ENCODE measurements at regions of chr2 and their contacts with region 1.

Region 1: DNA sequence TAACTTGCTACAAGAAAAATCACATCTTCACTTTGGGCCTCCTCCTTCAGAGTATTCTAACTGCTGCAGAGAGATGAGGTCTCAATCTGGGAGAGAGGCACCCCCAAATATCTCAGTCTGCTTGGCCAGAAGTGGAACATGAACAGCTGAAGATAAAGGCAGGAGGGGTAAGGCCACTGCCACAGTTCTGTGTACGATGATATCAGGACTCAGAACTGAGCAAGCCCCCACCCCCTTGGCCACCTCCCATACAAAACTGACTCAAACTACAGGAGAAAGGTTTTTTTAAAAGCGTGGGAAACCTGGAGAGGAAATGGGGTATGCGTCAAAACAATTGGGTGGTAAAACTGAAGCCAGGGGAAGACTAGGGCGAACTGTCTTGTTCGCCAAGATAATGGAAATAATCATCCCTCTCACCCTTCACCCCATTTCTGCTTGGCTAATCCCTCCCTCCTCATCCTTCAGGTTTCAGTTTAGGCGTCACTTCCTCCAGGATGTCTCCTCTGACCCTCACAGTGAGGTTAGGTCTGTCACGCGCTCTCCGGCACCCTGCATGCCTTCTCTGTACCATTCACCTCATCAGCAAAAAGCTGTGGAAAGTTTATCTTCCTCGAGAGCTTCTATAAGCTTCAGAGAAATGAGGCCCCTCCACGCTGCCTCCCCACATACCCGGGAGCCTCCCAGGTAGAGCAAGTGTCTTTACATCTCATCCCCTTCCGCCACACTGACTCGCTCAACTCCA is 64.4 kb downstream of the SFXN5 start:
- DNase-seq: no peak
- H3K4me3 ChIP-seq: no peak overlapping the region
- H3K27ac ChIP-seq: no peak overlapping the region
- H3K4me1 ChIP-seq: no peaks in the 10 kb centered on the region
- H3K27me3 ChIP-seq: no peaks in the 10 kb centered on the region
- CTCF ChIP-seq: no peak
- EP300 ChIP-seq: no peak
- POLR2A ChIP-seq: no peak

Region 2: GRCh38 chr2:71207601-71208000 is 1799.5 kb before region 1 on chr2:
- intact Hi-C with region 1: no loop called
- DNase-seq: no peak
- H3K4me3 ChIP-seq: no peak overlapping the region
- H3K27ac ChIP-seq: no peak overlapping the region
- H3K4me1 ChIP-seq: no peaks in the 10 kb centered on the region
- H3K27me3 ChIP-seq: no peaks in the 10 kb centered on the region
- CTCF ChIP-seq: no peak
- EP300 ChIP-seq: no peak
- POLR2A ChIP-seq: no peak

Region 3: DNA sequence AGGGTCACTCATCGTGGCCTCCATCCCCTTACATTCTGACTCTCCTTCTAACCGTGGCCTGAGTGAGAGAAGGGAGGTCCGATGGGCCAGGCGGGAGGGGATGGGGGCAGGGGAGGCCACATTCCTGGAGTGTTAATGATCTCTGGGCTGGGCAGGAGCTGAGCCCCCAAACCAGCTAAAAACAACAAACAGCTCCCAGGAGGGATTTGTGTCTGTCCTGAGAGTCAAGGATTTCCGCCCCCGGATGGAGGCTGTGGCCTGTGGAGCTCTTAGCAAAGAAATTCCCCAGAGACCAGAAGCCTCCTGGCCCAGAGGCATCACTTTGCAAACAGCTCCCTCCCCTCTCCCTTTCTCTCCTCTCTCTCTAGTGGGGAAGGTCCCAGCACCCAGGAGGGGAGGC is 66.4 kb before region 1 on chr2:
- intact Hi-C with region 1: loop called (anchors 2 kb)
- DNase-seq: no peak
- H3K4me3 ChIP-seq: no peak overlapping the region
- H3K27ac ChIP-seq: no peak overlapping the region
- H3K4me1 ChIP-seq: peaks cover 0 to 16% (median 10%) of the 10 kb centered on the region in 4 donors
- H3K27me3 ChIP-seq: no peaks in the 10 kb centered on the region
- CTCF ChIP-seq: no peak
- EP300 ChIP-seq: no peak
- POLR2A ChIP-seq: no peak

Region 4: DNA sequence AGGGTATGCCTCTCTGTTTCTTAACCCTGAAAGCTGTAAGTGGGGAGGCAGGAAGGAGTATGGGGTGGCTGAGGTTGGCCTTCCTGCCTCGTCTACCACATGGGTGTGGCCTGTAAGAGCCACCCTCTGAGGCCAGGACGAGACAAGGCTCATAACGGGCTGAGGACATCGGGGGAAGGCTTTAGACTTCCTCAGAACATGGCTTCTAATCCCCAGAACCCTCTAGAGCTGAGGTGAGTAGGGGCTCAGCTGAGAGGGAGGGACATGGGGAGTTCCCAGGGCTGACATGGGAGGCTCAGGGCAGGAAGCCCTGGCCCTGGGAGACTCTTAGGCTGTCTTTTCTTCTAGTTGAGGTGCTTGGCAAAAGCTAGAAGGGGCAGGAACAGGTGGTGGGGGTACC is 53.2 kb before region 1 on chr2:
- intact Hi-C with region 1: no loop called
- DNase-seq: no peak
- H3K4me3 ChIP-seq: no peak overlapping the region
- H3K27ac ChIP-seq: no peak overlapping the region
- H3K4me1 ChIP-seq: no peaks in the 10 kb centered on the region
- H3K27me3 ChIP-seq: no peaks in the 10 kb centered on the region
- CTCF ChIP-seq: no peak
- EP300 ChIP-seq: no peak
- POLR2A ChIP-seq: no peak